ENCODE measurements at regions of chr10 and their contacts with region 1.

Region 1: GRCh38 chr10:129369566-129369965 is 97.5 kb upstream of the MGMT start:
- DNase-seq: no peak
- H3K4me3 ChIP-seq: no peak overlapping the region
- H3K27ac ChIP-seq: no peak overlapping the region
- H3K4me1 ChIP-seq: peaks cover 5% of the 10 kb centered on the region
- H3K27me3 ChIP-seq: no peaks in the 10 kb centered on the region
- CTCF ChIP-seq: no peak

Region 2: GRCh38 chr10:129353096-129353495 is 16.5 kb before region 1 on chr10:
- CTCF ChIA-PET with region 1: no interaction called
- POLR2A ChIA-PET with region 1: interaction called, 15 read pairs
- intact Hi-C with region 1: no loop called
- DNase-seq: no peak
- H3K4me3 ChIP-seq: no peak overlapping the region
- H3K27ac ChIP-seq: no peak overlapping the region
- H3K4me1 ChIP-seq: no peaks in the 10 kb centered on the region
- H3K27me3 ChIP-seq: no peaks in the 10 kb centered on the region
- CTCF ChIP-seq: no peak

Region 3: GRCh38 chr10:129568583-129569344 is 199.2 kb after region 1 on chr10:
- CTCF ChIA-PET with region 1: no interaction called
- POLR2A ChIA-PET with region 1: no interaction called
- intact Hi-C with region 1: no loop called
- DNase-seq: no peak
- H3K4me3 ChIP-seq: no peak overlapping the region
- H3K27ac ChIP-seq: no peak overlapping the region
- H3K4me1 ChIP-seq: no peaks in the 10 kb centered on the region
- H3K27me3 ChIP-seq: no peaks in the 10 kb centered on the region
- CTCF ChIP-seq: no peak